H1 (cell line): ENCODE measurements at regions of chr4 and their contacts with region 1.

Region 1: GRCh38 chr4:141133146-141133998 is at the start of gene RNF150:
- DNase-seq: peak; percentile 73 to 84
- H3K4me3 ChIP-seq: peak within 1 kb of the TSS; percentile 78 to 87 (median 83)
- H3K27ac ChIP-seq: no peak within 1 kb of the TSS
- H3K4me1 ChIP-seq: peaks cover 0 to 7% (median 4%) of the 10 kb centered on the region in 4 experiments; a peak in 4 of 7 replicates
- H3K27me3 ChIP-seq: peaks cover 0 to 16% (median 13%) of the 10 kb centered on the region in 4 experiments; a peak in 5 of 7 replicates
- CTCF ChIP-seq: peak; percentile 54 to 82 (median 73)
- EP300 ChIP-seq: 0 out of 3 replicates have a peak, but pooled peaks of 1 of the 2 experiments have one; percentile 57
- POLR2A ChIP-seq: peak in 1 of 2 experiments; percentile 71; a peak in 1 of 3 replicates
- RAD21 ChIP-seq: peak; percentile 82 to 83
- total RNA-seq, gene RNF150: 4.8 and 6.3 TPM in 2 replicates

Region 2: DNA sequence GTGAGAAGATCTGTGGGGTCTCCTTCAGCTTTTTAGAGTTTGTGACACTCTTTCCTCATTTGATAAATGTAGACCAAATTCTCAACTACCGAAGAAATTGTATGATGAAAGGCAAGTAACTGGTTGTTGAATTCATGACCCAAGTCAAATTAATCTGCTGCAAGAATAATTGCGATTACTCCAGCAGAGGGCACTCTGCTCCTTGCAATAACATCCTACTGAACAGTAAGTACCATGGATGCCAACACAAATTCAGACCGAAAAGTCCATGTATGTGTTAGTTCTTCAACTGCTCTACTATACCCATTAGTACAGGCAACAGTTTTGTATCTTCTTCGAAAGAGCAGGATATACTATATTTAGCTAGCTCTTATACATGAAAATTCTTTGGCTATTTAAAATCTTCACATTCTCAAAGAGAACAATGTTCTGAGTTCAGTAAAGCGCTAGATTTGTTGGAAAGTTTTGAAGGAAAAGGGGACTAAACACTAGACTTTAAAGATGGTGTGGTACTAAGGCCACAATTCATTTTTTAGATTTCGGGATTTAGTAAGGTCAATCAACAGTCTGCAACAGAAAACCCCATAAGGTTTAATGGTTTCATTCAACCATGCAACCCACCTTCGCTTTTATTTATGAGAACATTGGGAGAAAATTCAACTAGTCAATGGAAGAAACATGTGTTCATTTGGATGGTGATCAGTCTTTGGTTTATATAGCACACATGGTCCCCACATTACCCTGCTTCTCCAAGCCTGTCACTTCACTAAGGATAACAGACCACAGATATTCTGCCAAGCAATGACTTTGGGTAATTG is 271.8 kb before region 1 on chr4:
- CTCF ChIA-PET with region 1: interaction called, 39 read pairs
- POLR2A ChIA-PET with region 1: no interaction called
- DNase-seq: peak; percentile 36 to 58
- H3K4me3 ChIP-seq: no peak overlapping the region
- H3K27ac ChIP-seq: no peak overlapping the region
- H3K4me1 ChIP-seq: peaks cover 0 to 5% (median 2%) of the 10 kb centered on the region in 4 experiments; a peak in 2 of 7 replicates
- H3K27me3 ChIP-seq: no peaks in the 10 kb centered on the region
- CTCF ChIP-seq: peak in 2 of 3 experiments; percentile 78; a peak in 3 of 4 replicates
- EP300 ChIP-seq: no peak
- POLR2A ChIP-seq: no peak
- RAD21 ChIP-seq: peak; percentile 95

Region 3: GRCh38 chr4:140870427-140870826 is 262.9 kb before region 1 on chr4:
- CTCF ChIA-PET with region 1: interaction called, 11 read pairs
- POLR2A ChIA-PET with region 1: no interaction called
- DNase-seq: no peak
- H3K4me3 ChIP-seq: no peak overlapping the region
- H3K27ac ChIP-seq: no peak overlapping the region
- H3K4me1 ChIP-seq: no peaks in the 10 kb centered on the region; a peak in 2 of 7 replicates
- H3K27me3 ChIP-seq: no peaks in the 10 kb centered on the region
- CTCF ChIP-seq: no peak
- EP300 ChIP-seq: no peak
- POLR2A ChIP-seq: no peak
- RAD21 ChIP-seq: no peak

Region 4: GRCh38 chr4:140884431-140885058 is 248.8 kb before region 1 on chr4:
- CTCF ChIA-PET with region 1: interaction called, 25 read pairs
- POLR2A ChIA-PET with region 1: interaction called, 4 read pairs
- DNase-seq: peak; percentile 13 to 57
- H3K4me3 ChIP-seq: no peak overlapping the region
- H3K27ac ChIP-seq: no peak overlapping the region
- H3K4me1 ChIP-seq: no peaks in the 10 kb centered on the region
- H3K27me3 ChIP-seq: no peaks in the 10 kb centered on the region
- CTCF ChIP-seq: peak; percentile 30 to 86 (median 83)
- EP300 ChIP-seq: no peak
- POLR2A ChIP-seq: no peak
- RAD21 ChIP-seq: peak; percentile 88 to 93

Region 5: GRCh38 chr4:140996766-140997165 is 136.6 kb before region 1 on chr4:
- CTCF ChIA-PET with region 1: interaction called, 14 read pairs
- POLR2A ChIA-PET with region 1: no interaction called
- DNase-seq: no peak
- H3K4me3 ChIP-seq: no peak overlapping the region
- H3K27ac ChIP-seq: no peak overlapping the region
- H3K4me1 ChIP-seq: no peaks in the 10 kb centered on the region
- H3K27me3 ChIP-seq: no peaks in the 10 kb centered on the region
- CTCF ChIP-seq: no peak
- EP300 ChIP-seq: no peak
- POLR2A ChIP-seq: no peak
- RAD21 ChIP-seq: no peak